Naive thymus-derived CD4-positive, alpha-beta T cell (primary cell): ENCODE measurements at regions of chr2 and their contacts with region 1.

Region 1: DNA sequence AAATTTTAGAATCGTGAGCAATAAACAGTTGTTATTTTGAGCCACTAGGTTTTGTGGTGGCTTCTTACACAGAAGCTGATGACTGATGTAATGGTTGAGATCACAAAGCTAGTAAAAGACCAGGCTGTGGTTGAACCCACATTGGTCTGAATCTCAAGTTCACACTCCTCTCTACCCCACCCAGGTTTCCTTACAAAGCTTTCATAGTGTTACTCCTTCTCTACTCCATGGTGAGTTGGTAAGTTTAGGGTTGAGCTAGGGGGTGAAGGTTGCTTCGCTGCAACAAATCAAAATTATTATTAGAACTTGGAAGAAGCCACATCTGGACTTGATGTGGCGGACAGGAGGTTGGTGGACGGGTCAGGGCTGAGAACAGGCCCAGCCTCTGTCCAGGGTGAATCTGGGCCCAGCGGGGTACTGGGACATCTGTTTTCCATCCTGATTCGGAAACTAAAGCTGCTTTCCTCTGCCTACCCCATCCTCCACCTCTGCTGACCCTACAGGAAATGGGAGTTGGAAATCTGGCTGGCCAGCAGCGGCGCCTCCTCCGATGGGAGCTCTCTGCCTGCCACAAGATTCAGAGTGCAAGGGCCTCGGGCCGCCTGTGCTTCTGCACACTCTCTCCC is 86.3 kb downstream of the ZFP36L2 start:
- DNase-seq: peak in 1 of 9 donors; percentile 39
- ATAC-seq: peak; percentile 17
- H3K4me3 ChIP-seq: peak overlapping the region; percentile 6
- H3K4me3 Mint-ChIP-seq: peak overlapping the region; percentile 41 to 86 (median 62)
- H3K27ac ChIP-seq: peak overlapping the region; percentile 96
- H3K27ac Mint-ChIP-seq: peak overlapping the region; percentile 82 to 100 (median 96)
- H3K4me1 ChIP-seq: peaks cover 61 to 83% of the 10 kb centered on the region in 2 donors
- H3K4me1 Mint-ChIP-seq: peaks cover 65 to 95% (median 78%) of the 10 kb centered on the region in 7 donors
- H3K27me3 ChIP-seq: no peaks in the 10 kb centered on the region
- H3K27me3 Mint-ChIP-seq: no peaks in the 10 kb centered on the region

Region 2: DNA sequence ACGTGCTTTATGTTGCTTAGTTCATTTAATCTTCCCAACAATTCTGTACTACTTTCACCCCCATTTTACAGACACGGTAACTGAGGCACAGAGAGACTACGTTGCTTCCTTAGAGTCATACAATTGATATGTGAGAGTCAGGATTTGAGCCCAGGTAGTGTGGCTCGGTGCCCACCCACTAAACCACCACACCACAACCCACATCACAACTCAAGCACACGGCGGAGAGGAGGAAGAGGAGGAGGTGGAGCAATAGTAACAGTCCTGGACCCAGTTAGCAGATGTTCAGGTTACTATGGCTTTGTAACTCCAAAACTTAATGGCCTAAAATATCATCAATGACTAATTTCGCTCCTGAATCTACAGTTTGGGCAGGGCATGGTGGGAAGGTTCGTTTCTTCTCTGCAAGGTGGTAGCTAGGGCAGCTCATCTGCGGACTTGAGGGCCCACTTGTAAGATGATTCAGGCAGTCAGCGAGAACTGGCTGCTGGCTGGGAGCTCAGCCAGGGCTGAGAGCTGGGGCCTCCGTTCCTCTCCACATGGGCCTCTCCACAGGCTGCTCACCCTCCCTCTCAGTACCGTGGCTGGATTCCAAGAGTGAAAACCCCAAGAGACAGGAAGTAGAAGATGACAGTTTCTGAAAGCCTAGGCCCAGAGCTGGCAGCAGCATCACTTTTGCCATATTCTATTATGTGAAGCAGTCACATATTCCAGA is 80.8 kb before region 1 on chr2:
- CTCF ChIA-PET with region 1: no interaction called
- POLR2A ChIA-PET with region 1: interaction called, 4 read pairs
- intact Hi-C with region 1: loop called in 1 of 2 experiments (anchors 2 kb)
- DNase-seq: peak in 8 of 9 donors; percentile 49 to 79 (median 70)
- ATAC-seq: peak; percentile 88
- H3K4me3 ChIP-seq: peak overlapping the region; percentile 17
- H3K4me3 Mint-ChIP-seq: peak overlapping the region; percentile 46 to 80 (median 66)
- H3K27ac ChIP-seq: peak overlapping the region; percentile 52
- H3K27ac Mint-ChIP-seq: peak overlapping the region; percentile 79 to 95 (median 89)
- H3K4me1 ChIP-seq: peaks cover 26 to 27% of the 10 kb centered on the region in 2 donors
- H3K4me1 Mint-ChIP-seq: peaks cover 25 to 54% (median 47%) of the 10 kb centered on the region in 7 donors
- H3K27me3 ChIP-seq: no peaks in the 10 kb centered on the region
- H3K27me3 Mint-ChIP-seq: peaks cover 0 to 3% (median 0%) of the 10 kb centered on the region in 5 donors

Region 3: DNA sequence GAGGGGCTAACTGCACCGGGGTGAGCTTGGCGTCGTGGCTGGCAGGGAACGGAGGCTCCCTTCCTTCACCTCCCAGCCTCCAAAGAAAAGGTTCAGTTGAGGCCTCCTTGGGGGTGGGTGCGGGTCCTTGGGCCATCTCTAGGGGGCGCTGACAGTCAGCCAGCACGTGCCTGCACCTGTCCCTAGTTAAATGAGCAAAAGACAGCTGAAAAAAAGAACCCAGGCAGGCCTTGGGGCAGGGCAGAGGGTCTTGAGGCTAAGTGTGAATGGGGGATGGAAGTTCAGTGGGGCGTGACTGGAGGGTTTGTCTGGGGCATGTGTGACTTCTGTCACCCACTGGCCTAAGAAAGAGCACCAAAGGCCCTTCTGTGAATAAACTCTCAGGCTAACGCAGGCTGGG is 29.9 kb after region 1 on chr2:
- CTCF ChIA-PET with region 1: interaction called, 39 read pairs
- POLR2A ChIA-PET with region 1: interaction called, 1,274 read pairs
- intact Hi-C with region 1: no loop called
- DNase-seq: peak in 8 of 9 donors; percentile 51 to 74 (median 64)
- ATAC-seq: peak; percentile 26
- H3K4me3 ChIP-seq: peak overlapping the region; percentile 35
- H3K4me3 Mint-ChIP-seq: peak overlapping the region; percentile 68 to 91 (median 84)
- H3K27ac ChIP-seq: peak overlapping the region; percentile 99
- H3K27ac Mint-ChIP-seq: peak overlapping the region; percentile 94 to 100 (median 98)
- H3K4me1 ChIP-seq: peaks cover 64 to 70% of the 10 kb centered on the region in 2 donors
- H3K4me1 Mint-ChIP-seq: peaks cover 52 to 89% (median 76%) of the 10 kb centered on the region in 7 donors
- H3K27me3 ChIP-seq: no peaks in the 10 kb centered on the region
- H3K27me3 Mint-ChIP-seq: no peaks in the 10 kb centered on the region

Region 4: GRCh38 chr2:43194121-43194869 is 54.2 kb after region 1 on chr2:
- CTCF ChIA-PET with region 1: interaction called, 6 read pairs
- POLR2A ChIA-PET with region 1: interaction called, 120 read pairs
- intact Hi-C with region 1: loop called in 1 of 2 experiments (anchors 1 kb)
- DNase-seq: no peak
- ATAC-seq: no peak
- H3K4me3 ChIP-seq: peak overlapping the region; percentile 80
- H3K4me3 Mint-ChIP-seq: peak overlapping the region; percentile 86 to 100 (median 92)
- H3K27ac ChIP-seq: peak overlapping the region; percentile 98
- H3K27ac Mint-ChIP-seq: peak overlapping the region; percentile 94 to 100 (median 99)
- H3K4me1 ChIP-seq: peaks cover 61 to 69% of the 10 kb centered on the region in 2 donors
- H3K4me1 Mint-ChIP-seq: peaks cover 37 to 75% (median 59%) of the 10 kb centered on the region in 7 donors
- H3K27me3 ChIP-seq: no peaks in the 10 kb centered on the region
- H3K27me3 Mint-ChIP-seq: no peaks in the 10 kb centered on the region

Region 5: GRCh38 chr2:43595603-43596412 is 455.7 kb after region 1 on chr2 and contains the start of gene THADA:
- CTCF ChIA-PET with region 1: no interaction called
- POLR2A ChIA-PET with region 1: no interaction called
- intact Hi-C with region 1: loop called (anchors 5 to 10 kb)
- DNase-seq: peak; percentile 83 to 94 (median 91)
- ATAC-seq: peak; percentile 98
- H3K4me3 ChIP-seq: peak within 1 kb of the TSS; percentile 79
- H3K4me3 Mint-ChIP-seq: peak within 1 kb of the TSS; percentile 82 to 96 (median 94)
- H3K27ac ChIP-seq: peak within 1 kb of the TSS; percentile 87
- H3K27ac Mint-ChIP-seq: peak within 1 kb of the TSS; percentile 90 to 98 (median 97)
- H3K4me1 ChIP-seq: peaks cover 9 to 13% of the 10 kb centered on the region in 2 donors
- H3K4me1 Mint-ChIP-seq: peaks cover 23 to 48% (median 38%) of the 10 kb centered on the region in 7 donors
- H3K27me3 ChIP-seq: no peaks in the 10 kb centered on the region
- H3K27me3 Mint-ChIP-seq: peaks cover 0 to 6% (median 3%) of the 10 kb centered on the region in 5 donors
- total RNA-seq, gene THADA: 34.1 to 43.0 (median 41.0) TPM